GM10248 (cell line): ENCODE measurements at regions of chr10 and their contacts with region 1.

Region 1: DNA sequence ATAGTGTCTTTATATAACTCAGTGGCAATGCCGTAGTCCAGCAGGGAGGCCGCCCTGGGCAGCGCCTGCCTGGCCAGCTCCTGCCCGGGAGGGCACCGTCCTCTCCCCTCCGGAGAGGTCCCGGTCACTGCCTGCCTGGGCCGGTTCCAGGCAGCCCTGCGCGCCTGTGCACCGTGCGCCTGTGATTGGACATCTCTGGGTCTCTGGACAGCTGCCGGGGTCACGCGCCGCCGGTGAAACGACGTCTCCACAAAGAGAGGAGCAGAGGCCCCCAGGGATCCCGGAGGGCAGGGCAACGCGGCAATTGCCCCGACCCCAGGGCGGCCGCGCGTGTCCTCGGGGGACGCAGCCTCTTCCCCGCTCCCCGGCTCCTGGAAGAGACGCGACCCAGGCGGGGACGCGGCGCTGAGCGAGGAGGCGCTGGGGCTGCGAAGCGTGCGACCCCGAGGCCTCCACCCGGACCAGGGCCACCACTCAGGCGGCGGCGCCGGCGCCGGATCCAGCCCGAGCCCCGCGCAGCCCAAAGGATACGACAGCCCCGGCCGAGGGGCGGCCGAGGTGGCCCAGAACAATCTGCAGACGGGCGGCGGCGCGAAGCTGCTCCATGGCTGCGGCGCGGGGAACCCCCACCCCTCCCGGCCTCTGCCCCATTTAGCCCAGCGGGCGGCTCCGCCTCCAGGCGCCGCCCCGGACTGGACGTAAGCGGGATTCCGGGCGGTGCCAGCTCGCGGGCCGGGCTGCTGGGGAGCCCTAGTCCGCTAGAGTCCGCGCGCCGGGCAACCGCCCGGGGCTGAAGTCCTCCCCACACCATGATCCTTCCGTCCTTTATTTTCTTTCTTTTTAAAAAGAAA is at the start of gene PHYH:
- DNase-seq: peak; percentile 90
- CTCF ChIP-seq: no peak

Region 2: DNA sequence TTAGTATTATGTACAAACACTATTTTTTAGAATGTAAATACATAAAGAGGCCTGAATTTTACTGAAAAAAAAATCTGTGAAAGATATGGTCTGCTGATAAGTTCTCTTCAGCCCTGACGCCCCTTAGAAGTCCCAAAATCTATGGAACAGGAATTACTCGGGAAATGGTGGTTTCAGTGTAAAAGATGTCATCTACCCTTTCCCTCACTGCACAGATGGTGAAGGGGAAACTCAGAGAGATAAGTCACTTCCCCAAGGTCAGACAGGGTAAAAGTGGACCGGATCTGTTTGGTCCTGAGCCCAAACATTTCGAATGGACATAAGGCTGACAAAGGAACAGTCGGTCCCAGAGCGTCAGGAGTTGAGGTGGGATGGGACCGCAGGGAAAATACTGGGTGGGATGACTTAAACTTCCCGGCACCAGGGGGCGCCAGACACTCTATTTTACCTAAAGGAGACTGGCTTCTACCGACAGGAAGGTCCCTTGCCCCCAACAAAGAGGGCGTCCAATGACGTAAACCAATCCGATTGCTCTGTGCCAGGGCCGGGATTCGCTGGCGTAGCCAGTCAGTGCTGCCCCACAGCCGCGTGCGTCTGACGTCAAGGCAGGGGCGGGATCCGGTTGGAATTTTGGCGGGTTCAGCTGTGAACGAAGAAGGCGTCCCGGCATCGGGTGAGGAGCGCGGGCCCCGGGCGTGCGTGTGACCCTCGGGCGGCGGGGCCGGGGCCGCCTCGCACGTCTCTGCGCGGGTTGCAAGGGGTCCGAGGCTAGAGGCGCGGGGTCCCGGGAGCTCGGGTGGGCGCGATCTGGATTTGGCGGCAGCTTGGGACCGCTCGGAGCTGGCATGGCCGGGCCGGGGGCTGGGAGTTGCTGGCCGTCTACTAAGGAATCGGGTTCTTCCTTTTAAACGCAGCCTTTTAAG is 138.5 kb before region 1 on chr10 and contains the start of gene MCM10:
- CTCF ChIA-PET with region 1: interaction called, 64 read pairs
- POLR2A ChIA-PET with region 1: no interaction called
- DNase-seq: peak; percentile 97
- CTCF ChIP-seq: peak; percentile 71

Region 3: DNA sequence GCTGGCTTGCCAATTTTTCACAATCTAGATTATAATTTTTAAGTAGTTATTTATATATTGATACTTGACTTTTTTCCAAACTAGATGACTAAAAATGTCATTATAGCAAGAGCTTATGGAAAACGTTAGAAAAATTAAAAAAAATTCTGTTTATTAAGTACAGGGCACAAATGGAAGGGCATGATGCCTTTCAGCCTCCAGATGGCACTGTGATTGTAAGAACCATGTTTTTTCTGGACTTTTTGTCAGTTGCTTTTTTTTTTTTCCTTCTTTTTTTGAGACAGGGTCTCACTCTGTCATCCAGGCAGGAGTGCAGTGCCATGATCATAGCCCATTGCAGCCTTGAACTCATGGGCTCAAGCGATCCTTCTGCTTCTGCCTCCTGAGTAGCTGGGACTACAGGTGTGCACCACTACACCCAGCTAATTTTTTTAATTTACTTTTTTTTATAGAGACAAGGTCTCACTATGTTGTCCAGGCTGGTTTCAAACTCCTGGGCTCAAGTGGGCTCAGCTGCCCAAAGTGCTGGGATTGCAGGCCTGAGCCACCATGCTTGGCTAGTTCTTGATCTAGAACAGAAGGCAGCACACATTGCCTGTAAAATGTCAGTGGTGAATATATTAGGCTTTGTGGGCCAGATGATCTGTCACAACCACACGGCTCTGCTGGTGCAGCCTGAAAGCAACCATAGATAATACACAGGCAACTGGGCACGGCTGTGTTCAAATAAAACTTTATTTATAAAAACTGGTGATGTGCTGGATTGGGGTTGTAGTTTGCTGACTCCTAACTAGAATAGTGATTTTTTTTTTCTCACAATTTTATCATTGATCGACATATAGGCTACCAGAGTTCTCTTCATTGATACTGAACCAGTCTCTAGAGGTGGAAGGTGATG is 92.9 kb before region 1 on chr10:
- CTCF ChIA-PET with region 1: interaction called, 34 read pairs
- POLR2A ChIA-PET with region 1: no interaction called
- DNase-seq: no peak
- CTCF ChIP-seq: peak; percentile 31

Region 4: DNA sequence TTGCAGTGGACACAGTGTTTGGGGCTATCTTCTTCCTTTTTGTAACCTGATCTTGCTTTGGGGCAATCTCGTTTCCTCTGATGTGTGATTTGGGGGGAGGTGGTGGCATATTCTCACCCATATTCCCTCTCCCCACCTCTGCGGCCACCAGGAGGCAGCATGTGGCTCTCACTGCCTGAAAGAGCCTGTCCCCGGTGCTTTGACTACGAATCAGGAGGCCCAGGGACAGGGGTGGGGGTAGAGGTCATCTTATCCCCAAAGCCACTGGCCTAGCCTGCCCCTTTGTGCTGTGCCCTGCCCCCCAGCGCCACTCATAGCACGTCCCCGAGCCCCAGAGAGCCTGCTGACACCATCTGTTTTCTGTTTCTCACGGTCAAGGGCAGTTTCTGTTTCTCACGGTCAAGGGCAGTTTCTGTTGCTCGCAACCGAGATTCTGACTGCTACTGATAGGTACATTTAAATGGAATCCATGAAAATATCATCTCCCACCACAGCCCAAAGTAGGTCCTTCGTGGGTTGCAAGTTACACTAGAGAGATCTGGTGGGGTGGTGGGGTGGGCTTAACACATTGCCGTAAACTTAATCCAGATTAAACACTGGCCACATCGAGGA is 28.0 kb before region 1 on chr10:
- CTCF ChIA-PET with region 1: interaction called, 27 read pairs
- POLR2A ChIA-PET with region 1: no interaction called
- DNase-seq: peak; percentile 73
- CTCF ChIP-seq: peak; percentile 52

Region 5: DNA sequence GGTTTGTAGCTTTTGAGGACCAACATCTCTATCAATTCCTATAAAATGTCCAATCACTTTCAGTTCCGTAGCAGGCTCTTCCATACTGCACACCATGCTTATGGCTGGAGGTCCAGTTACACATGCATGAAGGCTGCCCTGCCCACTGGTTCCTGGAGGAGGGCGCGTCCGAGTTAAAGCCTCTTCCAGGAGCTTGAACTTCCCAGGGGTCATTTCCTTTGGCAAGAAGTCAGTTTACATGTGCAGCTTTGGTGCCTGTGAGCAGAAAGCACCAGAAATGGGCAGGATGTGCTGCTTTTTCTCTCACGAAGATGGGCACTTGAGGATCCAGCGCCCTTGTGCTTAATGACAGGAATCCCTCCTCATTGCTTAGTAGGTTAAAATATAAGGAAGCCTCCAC is 17.8 kb after region 1 on chr10:
- CTCF ChIA-PET with region 1: interaction called, 30 read pairs
- POLR2A ChIA-PET with region 1: interaction called, 8 read pairs
- DNase-seq: no peak
- CTCF ChIP-seq: no peak

Region 6: GRCh38 chr10:13348216-13349017 is 48.8 kb after region 1 on chr10 and contains the start of gene SEPHS1:
- CTCF ChIA-PET with region 1: interaction called, 27 read pairs
- POLR2A ChIA-PET with region 1: no interaction called
- DNase-seq: peak; percentile 87
- CTCF ChIP-seq: no peak

Region 7: GRCh38 chr10:13431122-13431521 is 131.5 kb after region 1 on chr10:
- CTCF ChIA-PET with region 1: no interaction called
- POLR2A ChIA-PET with region 1: no interaction called
- DNase-seq: no peak
- CTCF ChIP-seq: no peak